Heart right ventricle (tissue), 16 donors: ENCODE measurements at regions of chr9 and their contacts with region 1.

Region 1: DNA sequence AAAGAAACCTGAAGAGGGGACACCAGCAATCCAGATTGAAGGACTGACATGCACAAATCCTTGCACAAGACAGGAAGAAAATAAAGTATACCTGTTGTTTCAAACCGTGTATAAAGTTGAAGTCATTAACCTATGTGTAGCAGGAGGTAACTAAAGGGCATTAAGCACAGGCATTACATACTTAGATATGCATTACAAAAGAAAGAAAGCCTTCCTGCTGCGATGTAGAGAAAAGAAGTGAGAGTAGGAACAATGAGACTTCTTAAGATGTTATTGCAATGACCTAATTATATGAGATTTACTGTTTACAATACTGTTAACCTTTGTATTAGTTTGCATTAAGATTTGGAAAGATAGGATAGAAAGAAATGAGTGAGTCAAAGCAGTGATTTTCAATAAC is 308.9 kb upstream of the PTPRD start:
- DNase-seq: no peak
- ATAC-seq: no peak
- H3K4me3 ChIP-seq: no peak overlapping the region
- H3K27ac ChIP-seq: no peak overlapping the region
- H3K4me1 ChIP-seq: no peaks in the 10 kb centered on the region
- H3K27me3 ChIP-seq: no peaks in the 10 kb centered on the region
- CTCF ChIP-seq: no peak

Region 2: GRCh38 chr9:10366171-10366779 is 555.4 kb before region 1 on chr9:
- intact Hi-C with region 1: no loop called
- DNase-seq: peak in 1 of 2 donors; percentile 4
- ATAC-seq: no peak
- H3K4me3 ChIP-seq: no peak overlapping the region
- H3K27ac ChIP-seq: no peak overlapping the region
- H3K4me1 ChIP-seq: no peaks in the 10 kb centered on the region
- H3K27me3 ChIP-seq: no peaks in the 10 kb centered on the region
- CTCF ChIP-seq: peak; percentile 12 to 66 (median 50)

Region 3: GRCh38 chr9:10983251-10983650 is 61.6 kb after region 1 on chr9:
- intact Hi-C with region 1: loop called in 1 of 10 experiments (anchors 10 kb)
- DNase-seq: no peak
- ATAC-seq: no peak
- H3K4me3 ChIP-seq: no peak overlapping the region
- H3K27ac ChIP-seq: no peak overlapping the region
- H3K4me1 ChIP-seq: no peaks in the 10 kb centered on the region
- H3K27me3 ChIP-seq: no peaks in the 10 kb centered on the region
- CTCF ChIP-seq: no peak